Head of caudate nucleus (tissue), 42 donors: ENCODE measurements at regions of chr9 and their contacts with region 1.

Region 1: GRCh38 chr9:71819115-71819739 is 50.9 kb upstream of the CEMIP2 start:
- DNase-seq: peak in 34 of 42 donors; percentile 25 to 87 (median 58)

Region 2: GRCh38 chr9:71911253-71912074 is 92.2 kb after region 1 on chr9 and contains the start of gene C9orf85:
- intact Hi-C with region 1: loop called (anchors 10 kb)
- DNase-seq: peak; percentile 99 to 100 (median 100)

Region 3: GRCh38 chr9:72262063-72262462 is 442.8 kb after region 1 on chr9:
- intact Hi-C with region 1: loop called (anchors 10 kb)
- DNase-seq: no peak